CD8-positive, alpha-beta T cell (primary cell): ENCODE measurements at regions of chr5 and their contacts with region 1.

Region 1: GRCh38 chr5:157283434-157283833 is 17.5 kb downstream of the CYFIP2 start:
- DNase-seq: peak in 5 of 9 experiments; percentile 34 to 68 (median 48)
- ATAC-seq: peak; percentile 86
- H3K4me3 ChIP-seq: no peak overlapping the region
- H3K4me3 Mint-ChIP-seq: peak overlapping the region; percentile 58
- H3K27ac ChIP-seq: peak overlapping the region; percentile 16 to 55
- H3K27ac Mint-ChIP-seq: peak overlapping the region; percentile 95
- H3K4me1 ChIP-seq: peaks cover 90% of the 10 kb centered on the region
- H3K4me1 Mint-ChIP-seq: peaks cover 86% of the 10 kb centered on the region
- H3K27me3 ChIP-seq: no peaks in the 10 kb centered on the region
- H3K27me3 Mint-ChIP-seq: no peaks in the 10 kb centered on the region
- CTCF ChIP-seq: no peak

Region 2: GRCh38 chr5:157245477-157245876 is 38.0 kb before region 1 on chr5:
- CTCF ChIA-PET with region 1: interaction called, 4 read pairs
- POLR2A ChIA-PET with region 1: interaction called, 4 read pairs
- intact Hi-C with region 1: loop called in 1 of 2 experiments (anchors 5 kb)
- DNase-seq: no peak
- ATAC-seq: no peak
- H3K4me3 ChIP-seq: no peak overlapping the region
- H3K4me3 Mint-ChIP-seq: no peak overlapping the region
- H3K27ac ChIP-seq: peak overlapping the region in 1 of 2 experiments; percentile 72
- H3K27ac Mint-ChIP-seq: peak overlapping the region; percentile 95
- H3K4me1 ChIP-seq: peaks cover 62% of the 10 kb centered on the region
- H3K4me1 Mint-ChIP-seq: peaks cover 75% of the 10 kb centered on the region
- H3K27me3 ChIP-seq: no peaks in the 10 kb centered on the region
- H3K27me3 Mint-ChIP-seq: no peaks in the 10 kb centered on the region
- CTCF ChIP-seq: no peak

Region 3: DNA sequence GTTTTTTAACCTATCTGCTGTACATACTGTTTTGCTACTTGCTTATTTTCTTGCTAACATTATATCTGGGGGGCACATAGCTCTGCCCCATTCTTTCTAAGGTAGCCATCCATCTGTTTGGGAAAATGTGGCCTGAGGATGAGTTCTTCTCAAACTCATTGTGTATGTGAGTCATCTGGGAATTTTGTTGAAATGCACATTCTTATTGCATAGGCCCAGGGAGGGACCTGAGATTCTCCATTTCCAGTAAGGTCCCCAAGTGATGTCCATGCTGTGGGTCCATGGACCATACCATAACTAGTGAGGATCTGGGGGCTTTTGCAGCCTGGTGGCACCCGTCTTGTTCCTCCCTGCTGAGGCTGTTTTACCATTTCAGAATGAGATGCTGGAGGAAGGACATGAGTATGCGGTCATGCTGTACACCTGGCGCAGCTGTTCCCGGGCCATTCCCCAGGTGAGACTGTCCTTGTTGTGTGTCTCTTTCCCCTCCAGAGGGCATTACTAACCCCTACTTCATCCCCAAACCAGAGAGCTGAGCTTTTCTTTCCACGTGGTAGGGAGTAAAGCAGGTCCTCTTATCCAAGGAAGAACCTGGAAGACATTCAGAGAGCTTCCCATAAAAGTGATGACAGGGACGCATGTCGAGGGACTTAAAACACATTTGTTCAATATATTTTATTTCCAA is 11.1 kb after region 1 on chr5:
- CTCF ChIA-PET with region 1: interaction called, 3 read pairs
- POLR2A ChIA-PET with region 1: interaction called, 3 read pairs
- intact Hi-C with region 1: loop called in 1 of 2 experiments (anchors 2 kb)
- DNase-seq: no peak
- ATAC-seq: peak; percentile 26
- H3K4me3 ChIP-seq: no peak overlapping the region
- H3K4me3 Mint-ChIP-seq: no peak overlapping the region
- H3K27ac ChIP-seq: peak overlapping the region; percentile 3 to 62
- H3K27ac Mint-ChIP-seq: peak overlapping the region; percentile 79
- H3K4me1 ChIP-seq: peaks cover 35% of the 10 kb centered on the region
- H3K4me1 Mint-ChIP-seq: peaks cover 49% of the 10 kb centered on the region
- H3K27me3 ChIP-seq: no peaks in the 10 kb centered on the region
- H3K27me3 Mint-ChIP-seq: no peaks in the 10 kb centered on the region
- CTCF ChIP-seq: no peak

Region 4: DNA sequence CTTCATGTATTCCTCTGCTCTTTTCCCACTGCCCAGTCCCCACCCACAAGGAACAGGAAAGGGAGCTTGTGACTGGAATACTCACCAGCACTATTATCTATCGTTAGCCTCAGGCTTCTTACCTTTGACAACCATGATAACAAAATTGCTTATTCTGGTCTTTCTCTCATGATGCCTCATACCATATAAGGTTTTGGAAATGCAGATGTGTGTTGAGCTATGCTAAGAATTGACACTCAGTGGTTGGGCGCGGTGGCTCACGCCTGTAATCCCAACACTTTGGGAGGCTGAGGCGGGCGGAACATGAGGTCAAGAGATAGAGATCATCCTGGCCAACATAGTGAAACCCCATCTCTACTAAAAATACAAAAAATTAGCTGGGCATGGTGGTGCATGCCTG is 343.4 kb after region 1 on chr5:
- CTCF ChIA-PET with region 1: no interaction called
- POLR2A ChIA-PET with region 1: no interaction called
- intact Hi-C with region 1: no loop called
- DNase-seq: no peak
- ATAC-seq: no peak
- H3K4me3 ChIP-seq: no peak overlapping the region
- H3K4me3 Mint-ChIP-seq: no peak overlapping the region
- H3K27ac ChIP-seq: no peak overlapping the region
- H3K27ac Mint-ChIP-seq: no peak overlapping the region
- H3K4me1 ChIP-seq: no peaks in the 10 kb centered on the region
- H3K4me1 Mint-ChIP-seq: no peaks in the 10 kb centered on the region
- H3K27me3 ChIP-seq: no peaks in the 10 kb centered on the region
- H3K27me3 Mint-ChIP-seq: no peaks in the 10 kb centered on the region
- CTCF ChIP-seq: no peak